ENCODE measurements at regions of chr11 and their contacts with region 1.

Region 1: GRCh38 chr11:61129639-61130523 is 27.6 kb downstream of the CD5 start:
- DNase-seq: peak; percentile 94
- H3K4me3 ChIP-seq: peak overlapping the region in 3 of 4 donors; percentile 21 to 35 (median 34)
- H3K27ac ChIP-seq: peak overlapping the region; percentile 71 to 80 (median 73)
- H3K4me1 ChIP-seq: peaks cover 0 to 26% (median 18%) of the 10 kb centered on the region in 4 donors
- H3K27me3 ChIP-seq: no peaks in the 10 kb centered on the region
- CTCF ChIP-seq: peak; percentile 99 to 100 (median 100)
- EP300 ChIP-seq: no peak
- POLR2A ChIP-seq: no peak

Region 2: GRCh38 chr11:60775420-60775961 is 354.4 kb before region 1 on chr11:
- intact Hi-C with region 1: loop called (anchors 10 kb)
- DNase-seq: peak; percentile 92
- H3K4me3 ChIP-seq: no peak overlapping the region
- H3K27ac ChIP-seq: no peak overlapping the region
- H3K4me1 ChIP-seq: peaks cover 0 to 11% (median 7%) of the 10 kb centered on the region in 4 donors
- H3K27me3 ChIP-seq: no peaks in the 10 kb centered on the region
- CTCF ChIP-seq: peak; percentile 53 to 89 (median 77)
- EP300 ChIP-seq: no peak
- POLR2A ChIP-seq: no peak

Region 3: GRCh38 chr11:60831143-60831500 is 298.8 kb before region 1 on chr11:
- intact Hi-C with region 1: loop called (anchors 2 kb)
- DNase-seq: peak; percentile 87
- H3K4me3 ChIP-seq: no peak overlapping the region
- H3K27ac ChIP-seq: no peak overlapping the region
- H3K4me1 ChIP-seq: no peaks in the 10 kb centered on the region
- H3K27me3 ChIP-seq: no peaks in the 10 kb centered on the region
- CTCF ChIP-seq: peak; percentile 73 to 89 (median 88)
- EP300 ChIP-seq: no peak
- POLR2A ChIP-seq: no peak

Region 4: DNA sequence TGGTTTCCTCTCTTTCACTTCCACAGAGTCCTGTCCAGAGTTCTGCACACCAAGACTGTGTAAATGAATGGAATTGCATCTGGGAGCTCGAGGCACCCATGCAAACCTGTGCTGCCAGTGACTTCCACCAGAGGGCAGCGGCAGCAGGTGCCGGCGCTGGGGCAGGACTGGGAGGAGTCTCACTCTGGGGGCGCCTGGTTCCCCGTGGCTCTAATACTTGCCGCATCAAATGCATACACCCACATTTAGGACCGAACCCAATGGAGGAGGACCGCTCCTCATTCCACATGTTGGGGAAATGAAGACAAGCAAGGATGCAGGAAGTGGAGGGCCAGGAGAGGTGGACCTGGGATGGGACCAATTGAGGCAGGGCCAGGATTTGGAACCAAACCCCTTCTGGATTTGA is 159.5 kb before region 1 on chr11:
- intact Hi-C with region 1: loop called (anchors 1 kb)
- DNase-seq: no peak
- H3K4me3 ChIP-seq: no peak overlapping the region
- H3K27ac ChIP-seq: no peak overlapping the region
- H3K4me1 ChIP-seq: no peaks in the 10 kb centered on the region
- H3K27me3 ChIP-seq: no peaks in the 10 kb centered on the region
- CTCF ChIP-seq: peak; percentile 43 to 92 (median 72)
- EP300 ChIP-seq: no peak
- POLR2A ChIP-seq: no peak

Region 5: DNA sequence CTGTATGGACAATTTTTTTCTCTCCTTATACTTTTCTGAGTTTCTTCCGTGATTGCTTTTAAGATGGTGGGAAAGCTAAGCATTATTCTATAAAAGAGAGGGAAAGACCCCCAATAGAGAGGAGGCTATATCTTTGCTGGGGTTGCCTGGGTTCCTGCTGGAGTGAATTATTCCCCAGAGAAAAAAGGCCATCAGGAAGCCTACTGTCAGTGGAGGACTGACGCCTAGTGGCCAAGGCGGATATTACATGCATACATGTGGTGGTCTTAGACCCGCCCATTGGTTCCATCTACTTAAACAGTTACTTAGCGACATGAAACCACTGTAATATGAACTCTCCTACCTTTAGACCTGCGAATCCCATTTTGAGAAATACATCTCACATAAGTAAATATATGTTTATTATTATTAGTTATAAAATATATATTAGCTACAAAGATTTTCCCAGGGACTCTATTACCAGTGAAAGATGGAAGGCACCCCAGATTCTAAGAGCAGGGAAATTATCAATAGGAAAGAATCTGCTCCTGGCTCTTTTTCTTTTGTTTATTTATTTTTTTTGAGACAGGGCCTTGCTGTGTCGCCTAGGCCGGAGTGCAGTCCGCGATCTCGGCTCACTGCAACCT is 57.7 kb after region 1 on chr11:
- intact Hi-C with region 1: loop called (anchors 2 kb)
- DNase-seq: peak; percentile 85
- H3K4me3 ChIP-seq: no peak overlapping the region
- H3K27ac ChIP-seq: no peak overlapping the region
- H3K4me1 ChIP-seq: no peaks in the 10 kb centered on the region
- H3K27me3 ChIP-seq: no peaks in the 10 kb centered on the region
- CTCF ChIP-seq: peak; percentile 70 to 95 (median 88)
- EP300 ChIP-seq: no peak
- POLR2A ChIP-seq: no peak

Region 6: GRCh38 chr11:61297746-61298145 is 167.9 kb after region 1 on chr11:
- intact Hi-C with region 1: no loop called
- DNase-seq: peak; percentile 78
- H3K4me3 ChIP-seq: no peak overlapping the region
- H3K27ac ChIP-seq: peak overlapping the region in 3 of 4 donors; percentile 2 to 27 (median 9)
- H3K4me1 ChIP-seq: peaks cover 0 to 35% (median 27%) of the 10 kb centered on the region in 4 donors
- H3K27me3 ChIP-seq: peaks cover 6 to 35% (median 20%) of the 10 kb centered on the region in 3 donors
- CTCF ChIP-seq: no peak
- EP300 ChIP-seq: no peak
- POLR2A ChIP-seq: no peak

Region 7: DNA sequence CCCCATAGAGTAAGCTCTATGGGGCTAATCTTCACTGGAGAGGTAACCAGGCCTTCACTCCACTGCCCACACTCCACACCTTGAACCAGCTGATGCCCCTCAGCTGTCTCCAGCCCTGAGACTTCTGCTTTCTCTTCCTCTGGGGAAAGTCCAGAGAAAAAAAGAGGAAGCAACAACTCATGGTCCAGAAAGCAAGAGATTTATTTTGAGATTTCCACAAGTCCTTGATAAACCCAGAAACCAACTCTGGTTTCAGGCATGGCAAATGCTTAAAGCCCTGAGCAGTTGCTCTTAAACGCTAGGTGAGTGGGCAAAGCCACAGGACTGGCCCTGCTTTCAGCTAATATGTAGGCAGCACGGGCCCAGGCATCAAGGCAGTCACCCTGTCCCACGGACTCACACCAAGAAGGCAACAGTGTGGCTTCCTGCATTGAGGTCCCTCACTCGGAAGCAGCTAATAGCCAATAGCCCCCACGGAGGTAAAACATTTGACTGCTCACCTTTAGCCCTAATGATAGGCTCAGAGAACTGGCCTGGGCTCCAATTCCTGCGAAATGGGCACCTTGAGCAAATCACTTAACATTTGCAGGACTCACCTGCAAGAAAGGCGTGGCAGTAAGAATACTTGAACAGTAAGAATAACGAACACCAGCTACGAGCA is 227.5 kb after region 1 on chr11:
- intact Hi-C with region 1: no loop called
- DNase-seq: no peak
- H3K4me3 ChIP-seq: no peak overlapping the region
- H3K27ac ChIP-seq: no peak overlapping the region
- H3K4me1 ChIP-seq: peaks cover 2 to 18% (median 14%) of the 10 kb centered on the region in 4 donors
- H3K27me3 ChIP-seq: no peaks in the 10 kb centered on the region
- CTCF ChIP-seq: no peak
- EP300 ChIP-seq: no peak
- POLR2A ChIP-seq: no peak

Region 8: DNA sequence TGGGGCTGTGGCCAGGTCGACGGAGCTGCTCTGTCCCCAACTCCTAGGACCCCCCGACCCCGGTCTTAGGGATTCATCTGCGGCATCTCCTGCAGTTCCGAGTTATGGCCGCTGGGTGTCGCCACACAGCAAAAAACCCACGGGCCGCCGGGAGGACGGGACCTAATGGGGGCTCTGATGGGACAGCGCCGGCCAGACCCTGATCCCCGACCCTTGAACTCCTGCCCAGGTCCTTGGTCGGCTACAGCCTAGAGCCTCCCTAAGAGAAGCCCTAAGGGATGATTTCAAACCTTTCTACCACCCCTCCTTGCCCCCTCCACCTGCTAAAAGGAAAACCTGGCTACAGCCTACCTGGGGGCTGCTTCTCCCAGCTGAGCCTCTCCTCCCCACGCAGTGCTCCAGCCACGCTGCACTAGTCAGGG is 347.9 kb after region 1 on chr11:
- intact Hi-C with region 1: no loop called
- DNase-seq: peak; percentile 79
- H3K4me3 ChIP-seq: no peak overlapping the region
- H3K27ac ChIP-seq: no peak overlapping the region
- H3K4me1 ChIP-seq: peaks cover 0 to 29% (median 23%) of the 10 kb centered on the region in 4 donors
- H3K27me3 ChIP-seq: peaks cover 0 to 4% (median 0%) of the 10 kb centered on the region in 3 donors
- CTCF ChIP-seq: peak; percentile 81 to 95 (median 92)
- EP300 ChIP-seq: no peak
- POLR2A ChIP-seq: no peak

Measured in sigmoid colon (tissue), 7 donors.